HepG2 (cell line): ENCODE measurements at regions of chr9 and their contacts with region 1.

Region 1: DNA sequence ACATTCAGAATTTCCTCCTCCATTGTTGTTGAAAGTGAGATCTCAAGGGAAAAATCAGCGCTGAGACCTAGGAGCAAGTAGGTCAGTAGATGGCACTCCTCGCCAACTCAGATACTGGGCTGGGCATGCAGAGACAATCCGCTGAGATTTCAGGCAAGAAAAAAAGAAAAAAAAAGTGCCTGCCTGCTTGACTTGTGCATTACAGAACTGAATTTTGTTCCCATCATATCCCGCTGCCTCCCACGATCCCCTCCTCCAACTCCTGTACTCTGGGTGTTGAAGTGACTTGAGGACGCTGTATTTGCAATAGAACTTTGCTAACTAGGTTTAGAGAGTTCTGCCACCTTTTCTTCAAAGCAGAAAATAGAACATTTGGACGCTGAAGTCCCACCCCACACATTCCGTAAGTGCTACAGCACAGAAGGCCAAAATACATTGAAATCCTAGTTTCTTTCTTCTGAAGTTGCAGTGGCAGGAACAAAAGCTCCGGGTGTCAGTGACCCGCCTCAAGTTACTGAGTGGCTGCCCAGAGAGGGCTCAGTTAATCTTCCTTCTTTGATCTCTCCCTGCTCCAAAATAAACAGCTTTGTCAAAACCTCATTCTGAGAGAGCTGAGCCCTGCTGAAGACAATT is 265.8 kb downstream of the MLLT3 start:
- DNase-seq: peak; percentile 64
- ATAC-seq: peak; percentile 96
- H3K4me3 ChIP-seq: no peak overlapping the region; a peak in 2 of 6 replicates
- H3K27ac ChIP-seq: peak overlapping the region; percentile 6
- H3K4me1 ChIP-seq: peaks cover 18% of the 10 kb centered on the region
- H3K27me3 ChIP-seq: no peaks in the 10 kb centered on the region
- CTCF ChIP-seq: peak; percentile 85
- EP300 ChIP-seq: no peak
- POLR2A ChIP-seq: no peak
- RAD21 ChIP-seq: peak; percentile 69

Region 2: GRCh38 chr9:20684035-20684872 is 327.7 kb after region 1 on chr9 and contains the start of gene FOCAD:
- CTCF ChIA-PET with region 1: no interaction called
- POLR2A ChIA-PET with region 1: no interaction called
- in situ Hi-C with region 1: no loop called
- intact Hi-C with region 1: loop called (anchors 5 kb)
- DNase-seq: peak; percentile 89
- ATAC-seq: peak; percentile 99
- H3K4me3 ChIP-seq: peak within 1 kb of the TSS; percentile 65 to 89 (median 88)
- H3K27ac ChIP-seq: peak within 1 kb of the TSS; percentile 91
- H3K4me1 ChIP-seq: peaks cover 54% of the 10 kb centered on the region
- H3K27me3 ChIP-seq: no peaks in the 10 kb centered on the region; a peak in 1 of 5 replicates
- CTCF ChIP-seq: no peak
- EP300 ChIP-seq: 0 out of 4 replicates have a peak, but pooled peaks of 1 of the 2 experiments have one; percentile 46
- POLR2A ChIP-seq: peak; percentile 94 to 98
- RAD21 ChIP-seq: peak; percentile 50; the same call in 1 of the 2 replicates
- total RNA-seq, gene FOCAD: 31.1 and 52.7 TPM in 2 replicates

Region 3: GRCh38 chr9:20865347-20865746 is 508.8 kb after region 1 on chr9:
- CTCF ChIA-PET with region 1: no interaction called
- POLR2A ChIA-PET with region 1: no interaction called
- in situ Hi-C with region 1: no loop called
- intact Hi-C with region 1: loop called (anchors 10 kb)
- DNase-seq: no peak
- ATAC-seq: no peak
- H3K4me3 ChIP-seq: no peak overlapping the region
- H3K27ac ChIP-seq: no peak overlapping the region
- H3K4me1 ChIP-seq: no peaks in the 10 kb centered on the region
- H3K27me3 ChIP-seq: no peaks in the 10 kb centered on the region
- CTCF ChIP-seq: no peak
- EP300 ChIP-seq: no peak
- POLR2A ChIP-seq: no peak
- RAD21 ChIP-seq: no peak

Region 4: DNA sequence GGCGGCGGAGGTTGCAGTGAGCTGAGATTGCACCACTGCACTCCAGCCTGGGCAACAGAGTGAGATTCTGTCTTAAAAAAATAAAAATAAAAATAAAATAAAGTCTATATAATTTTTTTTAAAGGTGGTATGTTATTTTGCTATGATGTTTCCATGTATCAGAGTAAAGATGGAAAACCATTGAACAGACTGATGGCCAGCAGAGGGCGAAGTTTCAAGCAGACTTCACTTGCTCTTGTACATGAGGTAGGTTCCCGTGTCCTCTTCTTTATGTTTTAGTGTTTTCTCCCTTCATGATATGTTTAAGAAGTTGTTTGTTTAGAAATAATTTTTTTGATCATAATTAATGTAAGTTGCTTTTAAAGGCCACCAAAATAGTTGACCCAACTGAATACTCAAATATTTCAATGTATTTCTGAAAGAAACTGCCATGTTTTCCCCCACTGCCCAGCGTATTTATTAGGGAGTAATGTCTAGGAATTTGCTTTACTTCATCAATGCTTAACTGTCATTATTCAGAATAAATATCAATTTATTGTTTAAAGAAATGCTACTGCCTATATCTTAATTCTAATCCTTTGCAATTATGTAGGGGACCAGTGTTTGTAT is 528.6 kb after region 1 on chr9:
- CTCF ChIA-PET with region 1: no interaction called
- POLR2A ChIA-PET with region 1: no interaction called
- in situ Hi-C with region 1: no loop called
- intact Hi-C with region 1: loop called (anchors 5 kb)
- DNase-seq: peak; percentile 44
- ATAC-seq: peak; percentile 69
- H3K4me3 ChIP-seq: no peak overlapping the region
- H3K27ac ChIP-seq: no peak overlapping the region
- H3K4me1 ChIP-seq: no peaks in the 10 kb centered on the region
- H3K27me3 ChIP-seq: no peaks in the 10 kb centered on the region
- CTCF ChIP-seq: peak; percentile 48
- EP300 ChIP-seq: no peak
- POLR2A ChIP-seq: no peak
- RAD21 ChIP-seq: no peak

Region 5: GRCh38 chr9:20941174-20941690 is 584.7 kb after region 1 on chr9:
- CTCF ChIA-PET with region 1: interaction called, 19 read pairs
- POLR2A ChIA-PET with region 1: no interaction called
- in situ Hi-C with region 1: loop called (anchors 5 kb)
- intact Hi-C with region 1: loop called (anchors 1 kb)
- DNase-seq: peak; percentile 63
- ATAC-seq: peak; percentile 100
- H3K4me3 ChIP-seq: no peak overlapping the region
- H3K27ac ChIP-seq: no peak overlapping the region
- H3K4me1 ChIP-seq: no peaks in the 10 kb centered on the region
- H3K27me3 ChIP-seq: no peaks in the 10 kb centered on the region
- CTCF ChIP-seq: peak; percentile 94
- EP300 ChIP-seq: no peak
- POLR2A ChIP-seq: no peak
- RAD21 ChIP-seq: peak; percentile 83